GM13976 (cell line): ENCODE measurements at regions of chr13 and their contacts with region 1.

Region 1: GRCh38 chr13:27953676-27954405 is 15.3 kb downstream of the CDX2 start:
- DNase-seq: peak; percentile 92
- CTCF ChIP-seq: peak; percentile 97

Region 2: DNA sequence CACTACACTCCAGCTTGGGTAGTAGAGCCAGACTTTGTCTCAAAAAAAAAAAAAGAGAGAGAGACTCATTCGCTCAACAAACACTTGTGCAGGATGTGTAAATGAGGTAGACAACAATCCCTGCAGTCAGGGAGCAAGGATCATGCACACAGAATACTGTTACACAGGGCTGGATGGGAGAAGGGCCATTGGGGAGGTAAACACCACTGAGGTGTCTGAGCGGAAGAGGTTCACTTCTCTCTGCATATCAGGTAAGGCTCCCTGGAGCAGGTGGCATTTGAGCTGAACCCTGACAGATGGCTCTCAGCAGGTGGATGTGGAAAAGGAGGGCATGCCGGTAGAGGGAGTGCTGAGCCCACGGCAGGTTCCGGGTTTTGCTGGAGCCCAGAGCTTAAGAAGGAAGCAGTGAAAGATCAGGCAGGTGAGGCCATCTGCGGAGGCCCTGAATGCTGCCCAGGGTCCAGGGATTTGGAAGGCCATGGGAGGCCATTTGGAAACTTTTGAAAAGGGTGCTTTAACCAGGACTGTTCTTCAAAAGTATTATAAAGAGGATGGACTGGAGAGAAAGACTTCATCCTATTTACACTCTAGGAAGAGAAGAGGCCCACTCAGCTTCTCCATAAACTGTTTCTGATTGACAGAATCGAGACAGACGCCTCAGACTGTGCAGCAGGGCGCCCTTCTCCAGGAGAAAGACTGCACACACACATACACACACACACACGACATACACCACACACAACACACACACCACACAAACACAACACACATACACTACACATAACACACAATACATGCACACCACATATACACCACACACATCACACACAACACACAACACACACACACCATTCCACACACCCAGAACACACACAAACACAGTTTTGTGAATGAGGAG is 981.6 kb before region 1 on chr13:
- in situ Hi-C with region 1: loop called (anchors 25 kb)
- DNase-seq: no peak
- CTCF ChIP-seq: peak; percentile 40

Region 3: DNA sequence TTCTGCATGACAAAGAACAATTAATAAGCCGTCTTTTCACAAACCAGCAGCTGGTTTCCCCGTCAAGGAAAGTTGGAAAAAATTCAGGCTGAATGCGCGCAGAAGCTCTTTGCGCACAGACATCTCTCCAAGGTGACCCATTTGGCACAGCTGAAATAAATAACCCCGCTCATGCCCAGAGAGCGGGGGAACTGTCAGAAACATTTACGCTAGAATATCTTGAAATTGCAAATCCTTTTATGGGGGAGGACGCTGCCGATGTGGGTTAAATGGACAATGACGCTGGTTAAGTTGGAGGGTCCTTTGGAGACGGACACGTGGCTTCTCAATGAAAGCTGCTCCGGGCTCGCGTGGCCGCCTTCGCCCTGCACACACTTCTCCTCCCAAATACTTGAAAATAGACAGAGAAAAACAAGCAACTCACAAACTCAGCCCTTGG is 130.9 kb before region 1 on chr13:
- in situ Hi-C with region 1: no loop called
- DNase-seq: no peak
- CTCF ChIP-seq: no peak

Region 4: GRCh38 chr13:28128030-28128429 is 174.2 kb after region 1 on chr13:
- in situ Hi-C with region 1: no loop called
- DNase-seq: no peak
- CTCF ChIP-seq: no peak

Region 5: DNA sequence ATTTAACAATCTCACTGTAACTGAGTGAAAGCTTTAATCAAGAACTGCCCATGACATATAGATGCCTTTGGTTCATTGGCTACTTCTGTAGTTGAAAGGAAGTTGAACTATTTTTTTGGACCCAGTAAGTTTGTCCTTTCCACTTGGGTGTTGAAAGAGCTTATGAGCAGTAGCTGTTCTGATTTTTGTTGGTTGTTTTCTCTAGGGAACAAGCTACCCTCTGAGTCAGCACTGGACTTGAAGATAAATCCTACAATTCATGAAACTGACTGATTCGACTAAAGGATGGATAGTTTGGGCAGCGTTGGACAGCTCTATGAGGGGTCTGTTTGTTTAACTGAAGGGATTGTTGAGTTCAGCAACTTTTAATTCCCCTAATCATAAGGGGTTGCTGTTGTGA is 285.5 kb after region 1 on chr13:
- in situ Hi-C with region 1: no loop called
- DNase-seq: no peak
- CTCF ChIP-seq: no peak